Heart left ventricle (tissue), 16 donors: ENCODE measurements at regions of chr3 and their contacts with region 1.

Region 1: DNA sequence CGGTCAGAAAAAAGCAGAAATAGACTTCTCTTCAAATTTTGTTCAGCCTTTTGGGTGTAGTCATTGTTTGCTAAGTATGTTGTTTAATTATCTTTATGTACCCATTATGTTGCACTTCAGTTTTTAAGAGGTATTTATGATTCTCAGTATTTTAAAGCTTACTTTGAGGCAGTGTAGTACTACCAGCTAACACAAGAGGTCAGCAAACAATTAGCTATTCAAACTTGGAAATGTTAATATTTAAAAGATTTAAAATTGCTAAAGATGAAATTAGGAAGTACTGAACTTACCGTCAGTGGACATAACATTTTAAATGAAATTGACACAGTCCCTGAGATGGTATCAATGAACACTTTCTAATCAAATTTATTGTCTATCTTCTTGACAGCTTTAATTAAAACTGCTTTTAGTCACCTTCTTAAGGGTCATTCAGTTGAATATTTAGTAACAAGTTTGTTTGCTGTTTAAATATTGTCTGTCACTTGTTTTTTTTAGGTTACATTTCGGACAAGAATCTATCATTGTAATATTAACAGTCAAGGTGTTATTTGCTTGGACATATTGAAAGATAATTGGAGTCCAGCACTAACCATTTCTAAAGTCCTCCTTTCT is 28.1 kb downstream of the NKIRAS1 start:
- DNase-seq: no peak
- ATAC-seq: peak in 1 of 4 donors; percentile 27
- H3K4me3 ChIP-seq: no peak overlapping the region
- H3K27ac ChIP-seq: no peak overlapping the region
- H3K4me1 ChIP-seq: peaks cover 0 to 22% (median 8%) of the 10 kb centered on the region in 12 donors
- H3K27me3 ChIP-seq: no peaks in the 10 kb centered on the region
- CTCF ChIP-seq: peak; percentile 71 to 93 (median 80)
- POLR2A ChIP-seq: no peak

Region 2: GRCh38 chr3:23945903-23946751 is 57.4 kb after region 1 on chr3:
- intact Hi-C with region 1: loop called in 2 of 10 experiments (anchors 2 kb)
- DNase-seq: peak; percentile 98 to 99 (median 99)
- ATAC-seq: peak; percentile 90 to 95 (median 90)
- H3K4me3 ChIP-seq: peak overlapping the region; percentile 57 to 99 (median 84)
- H3K27ac ChIP-seq: peak overlapping the region in 11 of 12 donors; percentile 89 to 99 (median 98)
- H3K4me1 ChIP-seq: peaks cover 13 to 54% (median 50%) of the 10 kb centered on the region in 12 donors
- H3K27me3 ChIP-seq: no peaks in the 10 kb centered on the region
- CTCF ChIP-seq: peak in 2 of 12 donors; percentile 13 to 36
- POLR2A ChIP-seq: peak in 1 of 2 donors; percentile 60

Region 3: GRCh38 chr3:23987356-23987755 is 98.6 kb after region 1 on chr3:
- intact Hi-C with region 1: loop called in 1 of 10 experiments (anchors 5 kb)
- DNase-seq: no peak
- ATAC-seq: no peak
- H3K4me3 ChIP-seq: no peak overlapping the region
- H3K27ac ChIP-seq: no peak overlapping the region
- H3K4me1 ChIP-seq: peaks cover 0 to 15% (median 3%) of the 10 kb centered on the region in 12 donors
- H3K27me3 ChIP-seq: no peaks in the 10 kb centered on the region
- CTCF ChIP-seq: no peak
- POLR2A ChIP-seq: no peak